ENCODE measurements at regions of chr7 and their contacts with region 1.

Region 1: DNA sequence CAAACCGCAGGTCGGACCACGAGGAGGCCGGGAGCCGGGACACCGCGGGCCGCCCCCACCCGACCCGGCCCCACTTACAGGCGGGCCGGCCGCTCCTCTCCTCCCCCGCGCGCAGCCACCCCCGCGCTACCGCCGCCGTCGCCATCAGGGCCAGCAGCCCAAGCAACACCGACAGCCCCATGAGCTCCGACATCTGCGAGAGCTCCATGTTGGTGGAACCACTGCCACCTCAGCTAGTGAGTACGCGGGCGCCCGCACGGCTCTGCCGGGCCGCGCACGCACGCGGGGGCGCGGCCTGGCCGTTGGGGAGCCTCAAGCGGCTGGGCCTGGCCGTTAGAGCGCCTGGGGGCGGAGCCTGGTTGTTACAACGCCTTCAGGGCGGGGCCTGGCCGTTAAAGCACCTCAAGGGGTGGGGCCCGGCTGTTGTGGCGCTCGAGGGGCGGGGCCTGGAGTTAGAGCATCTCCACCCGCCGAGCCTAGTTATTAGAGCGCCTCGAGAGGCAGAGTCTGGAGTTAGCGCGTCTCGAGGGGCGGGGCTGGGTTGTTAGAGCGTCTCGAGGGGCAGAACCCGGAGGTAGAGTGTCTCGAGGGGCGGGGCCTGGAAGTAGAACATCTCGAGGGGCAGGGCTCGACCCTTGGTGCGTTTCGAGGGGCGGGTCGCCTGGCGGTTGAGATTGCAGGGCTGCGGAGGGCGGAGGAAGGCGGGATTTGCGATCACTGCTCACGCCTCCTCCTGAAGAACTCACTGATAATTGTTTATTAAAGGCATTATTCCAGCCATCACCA is at the start of gene TBL2:
- DNase-seq: peak; percentile 96
- H3K4me3 ChIP-seq: peak within 1 kb of the TSS; percentile 93
- H3K27ac ChIP-seq: peak within 1 kb of the TSS; percentile 78
- H3K27me3 ChIP-seq: no peaks in the 10 kb centered on the region
- CTCF ChIP-seq: 0 out of 2 replicates have a peak, but pooled peaks have one; percentile 4
- polyA plus RNA-seq, gene TBL2: 34.7 and 45.8 TPM in 2 replicates

Region 2: DNA sequence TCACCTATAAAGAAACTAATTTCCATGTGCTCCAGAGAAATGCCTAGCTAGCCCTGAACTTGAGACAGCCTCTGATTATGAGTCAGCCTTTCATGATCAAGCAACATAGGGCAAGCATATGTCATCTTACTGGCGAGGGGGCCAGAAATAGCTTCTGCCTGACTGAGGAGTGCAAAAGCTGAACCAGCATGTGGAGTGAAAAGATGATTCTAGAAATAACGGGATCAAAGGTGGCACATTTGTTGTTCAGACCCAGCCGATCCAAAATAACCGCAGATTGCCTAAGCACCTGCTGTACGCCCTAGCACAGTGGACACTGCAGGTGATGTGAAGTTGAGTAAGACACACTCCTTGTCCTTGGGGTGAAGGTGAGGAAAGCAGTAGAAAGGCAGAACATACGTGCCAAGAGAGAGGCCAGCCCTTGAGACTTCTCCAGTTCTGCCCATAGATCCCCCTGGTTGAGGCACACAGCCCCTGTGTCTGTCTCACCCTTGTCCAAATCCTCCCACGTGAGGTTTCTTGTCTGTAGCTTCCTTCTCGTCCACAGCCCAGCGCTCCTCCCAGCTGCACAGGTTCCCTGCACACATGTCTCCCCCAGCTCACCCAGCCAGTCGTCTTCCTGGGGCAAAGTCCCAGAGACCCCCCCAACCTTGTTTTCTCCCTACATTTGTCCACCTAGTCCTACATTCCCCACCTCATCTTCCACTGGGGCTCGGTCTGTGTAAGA is 18.3 kb before region 1 on chr7:
- CTCF ChIA-PET with region 1: no interaction called
- POLR2A ChIA-PET with region 1: interaction called, 12 read pairs
- DNase-seq: peak; percentile 69
- H3K4me3 ChIP-seq: no peak overlapping the region
- H3K27ac ChIP-seq: peak overlapping the region; percentile 89
- H3K27me3 ChIP-seq: no peaks in the 10 kb centered on the region
- CTCF ChIP-seq: no peak

Region 3: GRCh38 chr7:73567846-73568685 is 10.5 kb before region 1 on chr7:
- CTCF ChIA-PET with region 1: interaction called, 3 read pairs
- POLR2A ChIA-PET with region 1: interaction called, 10 read pairs
- DNase-seq: no peak
- H3K4me3 ChIP-seq: no peak overlapping the region
- H3K27ac ChIP-seq: no peak overlapping the region
- H3K27me3 ChIP-seq: no peaks in the 10 kb centered on the region
- CTCF ChIP-seq: no peak

Region 4: GRCh38 chr7:74061840-74062539 is 483.5 kb after region 1 on chr7:
- CTCF ChIA-PET with region 1: no interaction called
- POLR2A ChIA-PET with region 1: no interaction called
- DNase-seq: peak; percentile 69
- H3K4me3 ChIP-seq: no peak overlapping the region; the same call in 1 of the 2 replicates
- H3K27ac ChIP-seq: peak overlapping the region; percentile 78
- H3K27me3 ChIP-seq: peaks cover 3% of the 10 kb centered on the region
- CTCF ChIP-seq: no peak

Measured in AG04450 (cell line).